Activated CD4-positive, alpha-beta memory T cell treated with anti-CD3 and anti-CD28 coated beads, Interleukin-2, amount 10 ng/mL, durations not matched to agents 7 days and 5 days (primary cell): ENCODE measurements at regions of chr17 and their contacts with region 1.

Region 1: GRCh38 chr17:72725433-72726068 is 366.9 kb downstream of the SLC39A11 start:
- DNase-seq: peak; percentile 64
- H3K4me3 Mint-ChIP-seq: no peak overlapping the region
- H3K27ac Mint-ChIP-seq: peak overlapping the region; percentile 96
- H3K4me1 Mint-ChIP-seq: peaks cover 65% of the 10 kb centered on the region
- H3K27me3 Mint-ChIP-seq: no peaks in the 10 kb centered on the region

Region 2: DNA sequence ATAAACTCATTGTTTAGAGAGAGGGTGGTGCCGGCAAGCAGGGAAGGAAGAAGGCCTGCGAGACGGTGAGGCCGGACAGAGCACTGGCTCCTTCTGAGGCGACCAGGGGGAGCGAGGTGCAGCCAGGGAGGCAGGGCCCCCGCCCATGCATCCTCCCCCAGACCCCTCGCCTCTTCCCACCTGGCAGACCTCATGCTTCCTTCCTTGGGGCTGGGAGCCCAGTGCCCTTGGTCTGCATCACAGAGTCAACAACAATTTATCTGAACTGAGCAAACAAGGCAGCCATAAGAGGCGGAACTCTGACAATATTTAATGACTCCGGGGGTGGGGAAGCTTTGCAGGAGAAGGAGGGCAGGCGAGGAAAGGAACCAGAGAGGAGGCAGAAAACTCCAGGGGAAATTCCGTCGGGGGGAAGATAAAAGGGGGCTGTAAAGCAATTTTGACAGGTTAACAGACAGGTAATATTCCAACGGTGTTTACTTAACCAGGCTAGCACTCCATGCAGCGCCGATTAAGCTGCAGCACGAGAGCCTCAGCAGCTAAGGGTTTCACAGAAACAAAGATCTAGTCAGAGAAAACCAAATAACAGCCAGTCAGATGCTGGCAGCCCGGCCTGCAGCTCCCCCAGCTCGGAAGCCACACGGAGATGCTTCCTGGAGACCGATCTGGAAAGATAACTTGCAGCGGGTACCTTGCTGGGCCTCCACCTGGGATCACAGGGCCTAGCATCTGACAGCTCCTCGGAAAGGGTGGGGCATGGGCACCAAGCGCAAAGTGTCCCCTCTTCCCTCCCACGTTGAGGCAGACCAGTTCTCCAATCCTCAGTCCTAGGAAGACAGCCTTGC is 206.6 kb before region 1 on chr17:
- CTCF ChIA-PET with region 1: no interaction called
- POLR2A ChIA-PET with region 1: no interaction called
- DNase-seq: no peak
- H3K4me3 Mint-ChIP-seq: no peak overlapping the region
- H3K27ac Mint-ChIP-seq: no peak overlapping the region
- H3K4me1 Mint-ChIP-seq: no peaks in the 10 kb centered on the region
- H3K27me3 Mint-ChIP-seq: no peaks in the 10 kb centered on the region

Region 3: GRCh38 chr17:72592242-72592966 is 133.1 kb before region 1 on chr17:
- CTCF ChIA-PET with region 1: interaction called, 36 read pairs
- POLR2A ChIA-PET with region 1: interaction called, 23 read pairs
- DNase-seq: peak; percentile 85
- H3K4me3 Mint-ChIP-seq: peak overlapping the region; percentile 92
- H3K27ac Mint-ChIP-seq: peak overlapping the region; percentile 50
- H3K4me1 Mint-ChIP-seq: peaks cover 43% of the 10 kb centered on the region
- H3K27me3 Mint-ChIP-seq: peaks cover 43% of the 10 kb centered on the region

Region 4: DNA sequence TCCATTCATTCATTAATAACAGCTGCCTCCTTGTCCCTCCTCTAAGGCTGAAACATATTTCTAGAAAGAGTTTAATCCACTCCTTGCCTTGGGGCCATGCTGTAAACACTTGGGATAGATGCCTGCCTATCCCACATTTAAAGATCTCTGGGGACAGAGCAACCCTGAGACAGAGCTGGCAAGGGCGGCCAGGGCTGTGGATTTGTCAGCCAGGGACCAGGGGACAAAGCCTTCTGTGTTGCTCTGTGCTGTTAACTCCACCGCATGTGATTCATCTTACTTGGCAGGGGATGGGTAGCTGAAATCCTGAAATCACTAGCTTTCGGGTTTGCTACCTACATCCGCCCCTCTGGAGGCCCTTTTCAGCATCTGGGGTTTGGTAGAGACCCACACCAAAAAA is 26.0 kb before region 1 on chr17:
- CTCF ChIA-PET with region 1: interaction called, 22 read pairs
- POLR2A ChIA-PET with region 1: interaction called, 4 read pairs
- DNase-seq: no peak
- H3K4me3 Mint-ChIP-seq: no peak overlapping the region
- H3K27ac Mint-ChIP-seq: no peak overlapping the region
- H3K4me1 Mint-ChIP-seq: peaks cover 23% of the 10 kb centered on the region
- H3K27me3 Mint-ChIP-seq: no peaks in the 10 kb centered on the region

Region 5: GRCh38 chr17:72764632-72765041 is 39.1 kb after region 1 on chr17:
- CTCF ChIA-PET with region 1: no interaction called
- POLR2A ChIA-PET with region 1: no interaction called
- DNase-seq: no peak
- H3K4me3 Mint-ChIP-seq: no peak overlapping the region
- H3K27ac Mint-ChIP-seq: no peak overlapping the region
- H3K4me1 Mint-ChIP-seq: no peaks in the 10 kb centered on the region
- H3K27me3 Mint-ChIP-seq: no peaks in the 10 kb centered on the region

Region 6: GRCh38 chr17:72985881-72986720 is 260.6 kb after region 1 on chr17:
- CTCF ChIA-PET with region 1: interaction called, 36 read pairs
- POLR2A ChIA-PET with region 1: interaction called, 3 read pairs
- DNase-seq: peak; percentile 62
- H3K4me3 Mint-ChIP-seq: no peak overlapping the region
- H3K27ac Mint-ChIP-seq: no peak overlapping the region
- H3K4me1 Mint-ChIP-seq: peaks cover 1% of the 10 kb centered on the region
- H3K27me3 Mint-ChIP-seq: no peaks in the 10 kb centered on the region

Region 7: DNA sequence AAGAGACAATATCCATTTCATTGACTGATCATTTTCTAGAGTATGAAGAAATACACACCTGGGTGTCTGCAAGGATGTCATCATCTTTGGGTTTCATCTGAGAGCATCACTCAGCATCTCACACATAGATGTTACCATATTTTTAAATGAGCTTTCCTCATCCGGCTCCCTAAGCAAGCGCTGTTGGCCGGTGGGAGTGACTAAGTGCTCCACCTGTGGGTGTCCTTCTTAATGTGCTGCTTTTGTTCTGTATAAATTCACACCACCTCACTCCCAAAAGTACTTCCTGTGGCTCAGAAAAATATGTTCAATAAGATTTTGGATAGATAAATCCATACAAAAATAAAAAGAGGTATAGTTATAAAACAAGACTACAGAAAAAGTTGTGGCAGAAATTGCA is 446.7 kb after region 1 on chr17:
- CTCF ChIA-PET with region 1: interaction called, 10 read pairs
- POLR2A ChIA-PET with region 1: no interaction called
- DNase-seq: no peak
- H3K4me3 Mint-ChIP-seq: no peak overlapping the region
- H3K27ac Mint-ChIP-seq: no peak overlapping the region
- H3K4me1 Mint-ChIP-seq: peaks cover 12% of the 10 kb centered on the region
- H3K27me3 Mint-ChIP-seq: peaks cover 19% of the 10 kb centered on the region

Region 8: DNA sequence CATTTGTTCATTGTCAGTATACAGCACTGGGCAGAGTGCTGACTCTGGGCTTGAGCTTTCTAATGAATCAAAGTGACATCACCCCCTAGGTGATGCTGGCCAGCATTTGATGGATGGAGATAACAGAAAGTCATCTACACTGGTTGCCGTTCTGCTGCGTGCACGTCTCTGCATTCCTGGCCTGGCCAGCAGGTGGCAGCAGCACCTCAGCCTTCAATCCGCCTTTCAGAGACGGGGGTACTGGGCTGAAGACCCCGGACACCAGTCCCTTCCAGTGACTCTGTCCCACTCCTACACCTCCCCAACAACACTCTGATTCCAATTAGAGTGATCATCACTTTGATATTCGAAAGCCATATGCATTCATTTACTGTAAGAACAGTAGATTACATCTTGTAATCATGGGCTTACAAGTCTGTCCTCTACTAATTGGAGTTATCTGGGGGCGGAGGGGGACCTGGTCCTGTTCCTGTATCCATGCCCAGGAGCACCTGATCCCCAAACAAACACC is 530.2 kb after region 1 on chr17:
- CTCF ChIA-PET with region 1: interaction called, 25 read pairs
- POLR2A ChIA-PET with region 1: interaction called, 3 read pairs
- DNase-seq: peak; percentile 62
- H3K4me3 Mint-ChIP-seq: no peak overlapping the region
- H3K27ac Mint-ChIP-seq: no peak overlapping the region
- H3K4me1 Mint-ChIP-seq: no peaks in the 10 kb centered on the region
- H3K27me3 Mint-ChIP-seq: no peaks in the 10 kb centered on the region